ENCODE measurements at regions of chr3 and their contacts with region 1.

Region 1: GRCh38 chr3:184371570-184372018 is 6.4 kb downstream of the THPO start:
- DNase-seq: peak; percentile 72
- H3K4me3 ChIP-seq: no peak overlapping the region
- H3K27ac ChIP-seq: no peak overlapping the region
- H3K27me3 ChIP-seq: peaks cover 28% of the 10 kb centered on the region
- CTCF ChIP-seq: peak; percentile 100

Region 2: DNA sequence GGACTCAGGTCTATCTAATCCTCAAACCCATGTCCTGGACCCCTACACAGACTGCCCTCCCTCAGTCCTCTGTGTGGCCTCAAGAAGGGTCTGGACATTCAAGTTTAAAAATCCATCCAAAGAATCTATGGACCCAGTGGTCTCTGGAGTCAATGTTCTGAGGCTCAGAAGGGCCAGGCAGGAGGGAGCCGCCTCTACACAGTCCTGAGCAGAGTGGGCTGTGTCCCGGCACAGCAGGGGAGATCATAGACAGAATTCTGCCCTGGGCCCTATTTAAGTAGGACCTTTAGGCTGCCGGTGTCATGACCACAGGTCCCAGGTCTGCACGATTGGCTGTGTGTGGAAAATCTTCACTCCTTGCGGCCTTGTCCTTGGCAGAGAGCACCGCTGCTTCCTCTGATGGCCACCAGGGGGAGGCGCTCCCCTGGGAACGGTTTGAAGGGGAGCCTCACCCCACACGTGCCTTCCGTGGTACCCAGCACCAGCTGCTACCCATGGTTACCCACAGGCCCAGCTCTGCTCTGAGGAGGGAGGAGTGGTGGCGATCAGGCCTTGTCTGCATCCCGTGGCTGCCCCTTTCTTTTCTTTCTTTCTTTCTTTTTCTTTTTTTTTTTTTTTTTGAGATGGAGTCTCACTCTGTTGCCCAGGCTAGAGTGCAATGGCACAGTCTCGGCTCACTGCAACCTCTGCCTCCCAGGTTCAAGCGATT is 46.2 kb after region 1 on chr3:
- CTCF ChIA-PET with region 1: interaction called, 11 read pairs
- POLR2A ChIA-PET with region 1: no interaction called
- DNase-seq: peak; percentile 21
- H3K4me3 ChIP-seq: no peak overlapping the region
- H3K27ac ChIP-seq: no peak overlapping the region
- H3K27me3 ChIP-seq: peaks cover 3% of the 10 kb centered on the region
- CTCF ChIP-seq: peak; percentile 98

Region 3: GRCh38 chr3:184474897-184475296 is 103.3 kb after region 1 on chr3:
- CTCF ChIA-PET with region 1: interaction called, 12 read pairs
- POLR2A ChIA-PET with region 1: no interaction called
- DNase-seq: no peak
- H3K4me3 ChIP-seq: no peak overlapping the region
- H3K27ac ChIP-seq: no peak overlapping the region
- H3K27me3 ChIP-seq: peaks cover 31% of the 10 kb centered on the region
- CTCF ChIP-seq: no peak

Region 4: DNA sequence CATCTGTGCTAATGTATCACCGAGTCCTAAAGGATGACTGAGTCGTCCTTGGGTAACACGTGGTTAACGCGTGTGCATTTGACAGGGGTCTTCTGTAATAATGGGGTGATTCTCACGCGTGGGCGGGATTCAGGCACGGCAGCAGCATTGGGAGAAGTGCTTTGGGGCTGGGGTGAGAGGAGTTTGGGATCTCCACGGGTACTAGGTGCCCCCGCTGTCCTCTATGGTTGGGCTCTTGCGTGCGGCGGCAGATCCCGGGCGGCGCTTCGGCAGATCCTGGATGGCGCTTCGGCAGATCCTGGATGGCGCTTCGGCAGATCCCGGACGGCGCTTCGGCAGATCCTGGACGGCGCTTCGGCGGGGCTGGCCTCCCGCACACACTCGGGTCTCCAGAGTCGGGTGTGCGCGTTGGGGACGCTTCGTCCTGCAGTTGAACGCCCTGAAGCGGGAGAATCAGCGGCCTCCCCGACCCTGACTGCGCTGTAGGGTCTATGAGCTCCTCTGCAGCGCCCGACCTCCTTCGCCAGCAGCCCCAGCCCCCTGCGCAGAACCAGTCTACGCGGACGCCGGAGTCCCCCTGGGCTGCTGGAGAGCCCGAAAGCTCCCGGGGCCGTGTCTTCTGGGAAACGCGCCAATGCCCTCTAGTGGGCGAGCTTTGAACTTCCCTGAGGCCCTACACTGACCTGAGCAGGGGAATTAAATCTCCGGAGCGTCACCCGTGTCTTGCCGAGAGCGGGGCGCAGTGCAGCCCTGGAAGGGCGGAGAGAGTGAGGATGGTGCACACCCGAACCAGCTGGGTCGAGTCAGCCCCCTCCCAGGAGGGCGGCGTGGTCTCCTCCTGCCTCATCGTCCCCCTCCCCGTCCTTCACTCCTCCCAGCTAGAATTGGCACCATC is 141.9 kb after region 1 on chr3:
- CTCF ChIA-PET with region 1: interaction called, 278 read pairs
- POLR2A ChIA-PET with region 1: interaction called, 3 read pairs
- DNase-seq: peak; percentile 42
- H3K4me3 ChIP-seq: peak overlapping the region; percentile 46
- H3K27ac ChIP-seq: no peak overlapping the region
- H3K27me3 ChIP-seq: peaks cover 72% of the 10 kb centered on the region
- CTCF ChIP-seq: peak; percentile 85

Region 5: DNA sequence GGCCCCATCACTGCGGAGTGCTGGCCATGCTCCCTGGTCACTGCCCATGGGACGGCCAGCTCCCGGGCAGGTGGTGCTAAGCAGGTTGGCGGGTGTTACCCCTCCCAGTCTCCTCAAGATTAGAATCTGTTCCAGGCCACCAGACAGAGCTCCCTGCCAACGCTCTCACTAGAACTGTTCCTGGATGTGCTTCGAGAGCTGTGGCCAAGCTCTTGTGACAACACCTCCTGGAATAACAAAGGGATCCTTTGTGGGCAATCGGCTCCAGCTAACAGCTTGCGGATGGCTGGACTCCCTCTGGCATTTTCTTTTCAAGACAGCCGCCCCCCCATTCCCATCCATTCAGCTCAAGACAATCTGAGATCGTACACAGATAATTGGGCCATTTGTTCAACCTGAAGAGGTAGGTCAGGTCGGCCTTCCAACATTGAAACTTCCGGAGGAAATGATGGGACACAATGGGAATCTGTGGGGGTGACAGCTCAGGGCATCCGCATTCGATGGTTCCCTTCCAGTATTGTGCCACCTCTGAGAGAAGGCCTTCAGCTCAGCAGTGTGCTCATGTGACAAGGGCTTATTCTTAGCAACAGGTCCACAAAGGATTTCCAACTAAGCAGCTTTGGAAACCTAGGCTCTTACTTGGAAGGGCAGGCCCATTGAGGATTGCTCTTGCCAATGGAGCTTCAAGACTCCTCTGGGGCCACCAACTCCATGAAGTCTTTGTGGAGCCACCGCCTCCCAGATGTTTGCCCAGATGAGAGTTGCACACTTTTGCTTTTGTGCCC is 178.4 kb after region 1 on chr3:
- CTCF ChIA-PET with region 1: interaction called, 215 read pairs
- POLR2A ChIA-PET with region 1: interaction called, 4 read pairs
- DNase-seq: no peak
- H3K4me3 ChIP-seq: no peak overlapping the region
- H3K27ac ChIP-seq: no peak overlapping the region
- H3K27me3 ChIP-seq: peaks cover 30% of the 10 kb centered on the region
- CTCF ChIP-seq: no peak